T-cell (primary cell): ENCODE measurements at regions of chr1 and their contacts with region 1.

Region 1: DNA sequence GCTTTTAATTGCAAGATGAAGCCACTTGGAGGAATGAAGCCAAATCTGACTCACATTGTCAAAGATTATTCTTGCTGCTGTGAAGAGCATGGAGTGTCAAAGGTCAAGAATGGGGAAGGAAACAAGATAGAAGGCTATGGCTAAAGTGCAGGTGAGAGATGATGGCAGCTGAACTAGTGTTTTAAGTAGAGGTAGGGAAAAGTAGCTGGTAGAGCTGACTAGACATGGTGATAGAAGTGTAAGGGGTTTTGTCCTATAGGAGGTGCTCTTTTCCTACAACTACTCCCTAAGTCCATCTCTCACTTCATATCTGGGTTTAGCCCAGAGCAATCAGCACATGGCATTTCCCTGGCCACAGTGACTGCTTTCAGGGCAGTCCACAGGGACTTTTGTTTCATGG is 11.8 kb downstream of the UBE2T start:
- DNase-seq: no peak
- ATAC-seq: no peak
- H3K4me3 ChIP-seq: no peak overlapping the region
- H3K4me3 Mint-ChIP-seq: no peak overlapping the region
- H3K27ac ChIP-seq: no peak overlapping the region
- H3K27ac Mint-ChIP-seq: no peak overlapping the region
- H3K4me1 ChIP-seq: no peaks in the 10 kb centered on the region
- H3K4me1 Mint-ChIP-seq: no peaks in the 10 kb centered on the region
- H3K27me3 ChIP-seq: no peaks in the 10 kb centered on the region
- H3K27me3 Mint-ChIP-seq: no peaks in the 10 kb centered on the region

Region 2: DNA sequence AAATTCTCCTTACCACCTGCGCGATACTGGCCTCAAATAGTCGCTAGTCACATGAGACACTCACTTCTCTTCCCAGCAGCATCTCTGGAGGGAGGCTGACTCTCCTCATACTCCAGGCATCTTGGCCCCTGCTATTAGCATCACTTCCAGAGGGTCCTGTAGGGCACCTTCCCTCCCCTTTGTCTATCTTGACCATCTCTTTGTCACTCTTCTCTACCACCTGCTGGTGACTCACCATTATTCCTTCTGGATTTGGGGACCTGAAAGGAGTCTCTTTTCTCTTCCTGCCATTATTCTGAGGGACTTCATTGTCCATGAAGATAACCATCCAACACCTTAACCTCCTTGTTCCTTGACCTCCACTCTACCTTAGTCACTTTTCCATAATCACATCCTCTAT is 238.9 kb before region 1 on chr1:
- CTCF ChIA-PET with region 1: no interaction called
- POLR2A ChIA-PET with region 1: no interaction called
- DNase-seq: no peak
- ATAC-seq: no peak
- H3K4me3 ChIP-seq: no peak overlapping the region
- H3K4me3 Mint-ChIP-seq: no peak overlapping the region
- H3K27ac ChIP-seq: no peak overlapping the region
- H3K27ac Mint-ChIP-seq: no peak overlapping the region
- H3K4me1 ChIP-seq: no peaks in the 10 kb centered on the region
- H3K4me1 Mint-ChIP-seq: no peaks in the 10 kb centered on the region
- H3K27me3 ChIP-seq: peaks cover 0 to 4% of the 10 kb centered on the region in 2 experiments
- H3K27me3 Mint-ChIP-seq: peaks cover 4 to 13% of the 10 kb centered on the region in 2 donors

Region 3: GRCh38 chr1:202235856-202236837 is 93.7 kb before region 1 on chr1:
- CTCF ChIA-PET with region 1: no interaction called
- POLR2A ChIA-PET with region 1: no interaction called
- DNase-seq: peak in 34 of 35 experiments; percentile 14 to 75 (median 50)
- ATAC-seq: peak; percentile 63 to 79 (median 66)
- H3K4me3 ChIP-seq: no peak overlapping the region
- H3K4me3 Mint-ChIP-seq: no peak overlapping the region
- H3K27ac ChIP-seq: no peak overlapping the region
- H3K27ac Mint-ChIP-seq: no peak overlapping the region
- H3K4me1 ChIP-seq: no peaks in the 10 kb centered on the region
- H3K4me1 Mint-ChIP-seq: peaks cover 0 to 2% (median 0%) of the 10 kb centered on the region in 3 donors
- H3K27me3 ChIP-seq: peaks cover 0 to 29% of the 10 kb centered on the region in 2 experiments
- H3K27me3 Mint-ChIP-seq: peaks cover 7 to 18% of the 10 kb centered on the region in 2 donors

Region 4: GRCh38 chr1:202462342-202463076 is 132.6 kb after region 1 on chr1:
- CTCF ChIA-PET with region 1: no interaction called
- POLR2A ChIA-PET with region 1: interaction called in 1 of 2 experiments, 12 read pairs
- DNase-seq: no peak
- ATAC-seq: no peak
- H3K4me3 ChIP-seq: no peak overlapping the region
- H3K4me3 Mint-ChIP-seq: no peak overlapping the region
- H3K27ac ChIP-seq: no peak overlapping the region
- H3K27ac Mint-ChIP-seq: no peak overlapping the region
- H3K4me1 ChIP-seq: no peaks in the 10 kb centered on the region
- H3K4me1 Mint-ChIP-seq: peaks cover 0 to 4% (median 0%) of the 10 kb centered on the region in 3 donors
- H3K27me3 ChIP-seq: no peaks in the 10 kb centered on the region
- H3K27me3 Mint-ChIP-seq: no peaks in the 10 kb centered on the region